ENCODE measurements at regions of chr2 and their contacts with region 1.

Region 1: DNA sequence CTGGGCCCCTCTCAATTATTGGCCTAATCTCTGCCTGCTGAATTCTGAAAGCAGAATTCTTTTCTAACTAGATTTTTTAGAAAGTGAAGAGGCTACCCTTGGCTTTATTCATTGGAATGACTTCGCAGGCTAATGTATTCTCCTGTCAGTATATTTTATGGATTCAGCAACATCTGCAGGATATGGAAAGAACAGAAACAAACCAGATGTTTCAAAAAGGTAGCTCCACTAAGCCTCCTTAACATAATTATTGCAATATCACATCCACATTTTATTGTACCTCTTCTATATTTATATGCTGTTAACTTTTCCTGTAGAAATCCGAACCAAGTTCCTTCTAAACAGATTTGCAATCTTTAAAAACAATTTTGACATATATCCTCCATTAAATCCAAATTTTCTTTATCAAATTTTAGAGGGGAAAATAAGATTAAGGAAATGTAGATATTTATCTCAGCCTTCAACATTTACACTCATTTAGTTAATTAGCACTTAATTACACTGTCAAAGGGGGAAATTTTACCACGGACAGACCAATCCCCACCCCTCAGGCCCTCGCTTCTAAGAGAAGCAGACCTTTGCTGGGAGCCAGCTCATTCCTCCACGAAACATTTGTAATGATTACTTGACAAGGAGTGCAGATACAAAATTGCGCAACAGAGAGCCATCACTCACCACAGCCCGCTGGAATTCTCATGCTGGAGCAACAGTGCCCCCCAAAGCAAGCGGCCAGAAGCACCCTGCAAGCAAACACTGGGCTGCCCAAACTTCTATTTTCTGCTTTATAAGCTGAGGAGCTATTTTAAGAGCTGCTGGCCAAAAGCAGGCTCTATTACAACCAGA is 253.4 kb downstream of the ETAA1 start:
- DNase-seq: peak; percentile 96
- H3K4me3 ChIP-seq: peak overlapping the region in 1 of 4 donors; percentile 1
- H3K27ac ChIP-seq: peak overlapping the region; percentile 72 to 91 (median 83)
- H3K4me1 ChIP-seq: peaks cover 0 to 41% (median 32%) of the 10 kb centered on the region in 4 donors
- H3K27me3 ChIP-seq: no peaks in the 10 kb centered on the region
- CTCF ChIP-seq: peak; percentile 55 to 77 (median 66)
- EP300 ChIP-seq: peak in 3 of 4 donors; percentile 11 to 72 (median 63)
- POLR2A ChIP-seq: no peak

Region 2: GRCh38 chr2:66429071-66429477 is 1221.4 kb before region 1 on chr2:
- intact Hi-C with region 1: loop called (anchors 2 kb)
- DNase-seq: no peak
- H3K4me3 ChIP-seq: no peak overlapping the region
- H3K27ac ChIP-seq: peak overlapping the region; percentile 47 to 99 (median 95)
- H3K4me1 ChIP-seq: peaks cover 0 to 51% (median 38%) of the 10 kb centered on the region in 4 donors
- H3K27me3 ChIP-seq: peaks cover 0 to 7% (median 0%) of the 10 kb centered on the region in 3 donors
- CTCF ChIP-seq: peak; percentile 85 to 95 (median 91)
- EP300 ChIP-seq: no peak
- POLR2A ChIP-seq: no peak

Region 3: GRCh38 chr2:66686755-66687154 is 963.8 kb before region 1 on chr2:
- intact Hi-C with region 1: loop called (anchors 5 kb)
- DNase-seq: no peak
- H3K4me3 ChIP-seq: no peak overlapping the region
- H3K27ac ChIP-seq: peak overlapping the region; percentile 76 to 91 (median 85)
- H3K4me1 ChIP-seq: peaks cover 0 to 55% (median 23%) of the 10 kb centered on the region in 4 donors
- H3K27me3 ChIP-seq: no peaks in the 10 kb centered on the region
- CTCF ChIP-seq: no peak
- EP300 ChIP-seq: no peak
- POLR2A ChIP-seq: no peak

Region 4: GRCh38 chr2:66897181-66897580 is 753.3 kb before region 1 on chr2:
- intact Hi-C with region 1: loop called (anchors 10 kb)
- DNase-seq: peak; percentile 74
- H3K4me3 ChIP-seq: no peak overlapping the region
- H3K27ac ChIP-seq: peak overlapping the region; percentile 7 to 91 (median 63)
- H3K4me1 ChIP-seq: peaks cover 0 to 45% (median 32%) of the 10 kb centered on the region in 4 donors
- H3K27me3 ChIP-seq: no peaks in the 10 kb centered on the region
- CTCF ChIP-seq: no peak
- EP300 ChIP-seq: peak in 2 of 4 donors; percentile 72 to 76
- POLR2A ChIP-seq: no peak

Region 5: GRCh38 chr2:67215214-67216055 is 435.1 kb before region 1 on chr2:
- intact Hi-C with region 1: loop called (anchors 10 kb)
- DNase-seq: peak; percentile 89
- H3K4me3 ChIP-seq: peak overlapping the region in 1 of 4 donors; percentile 17
- H3K27ac ChIP-seq: peak overlapping the region; percentile 65 to 83 (median 74)
- H3K4me1 ChIP-seq: peaks cover 0 to 52% (median 27%) of the 10 kb centered on the region in 4 donors
- H3K27me3 ChIP-seq: no peaks in the 10 kb centered on the region
- CTCF ChIP-seq: peak; percentile 27 to 51 (median 45)
- EP300 ChIP-seq: no peak
- POLR2A ChIP-seq: no peak

Region 6: DNA sequence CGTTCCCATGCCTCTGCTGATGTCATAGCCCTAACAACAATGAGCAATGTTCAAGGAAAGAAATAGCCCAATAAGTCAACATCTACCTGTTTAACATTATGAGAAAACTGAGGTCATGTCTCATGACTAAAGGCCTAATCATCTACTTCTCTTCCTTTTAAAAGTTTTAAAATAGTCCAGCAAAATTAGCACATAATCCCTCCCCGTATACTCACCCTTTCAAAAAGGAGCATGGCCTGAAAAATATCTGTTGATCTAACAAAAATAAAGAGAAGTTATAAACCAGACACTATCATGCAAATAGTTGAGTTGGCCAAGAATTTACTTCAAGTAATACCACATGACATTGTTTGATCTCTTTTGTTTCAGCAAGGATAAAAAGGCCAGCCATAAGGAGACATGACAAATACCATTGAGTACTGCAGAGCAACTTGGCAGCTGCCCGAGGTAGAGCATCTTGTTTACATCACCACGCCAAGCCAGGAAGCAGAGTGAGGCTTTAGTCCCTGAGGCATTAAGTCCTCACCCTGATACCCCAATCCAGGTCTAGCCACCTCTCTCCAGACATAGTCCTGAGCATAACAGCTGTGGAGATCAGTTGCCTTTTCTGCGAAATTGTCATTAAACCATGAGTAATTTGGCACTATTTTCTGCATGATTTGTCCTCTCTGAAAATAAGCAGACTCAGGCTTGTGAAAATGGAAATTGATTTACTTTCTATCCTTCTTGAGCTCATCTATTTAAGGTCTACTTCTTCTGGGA is 390.8 kb before region 1 on chr2:
- intact Hi-C with region 1: loop called (anchors 2 kb)
- DNase-seq: peak; percentile 94
- H3K4me3 ChIP-seq: no peak overlapping the region
- H3K27ac ChIP-seq: peak overlapping the region; percentile 84 to 89 (median 86)
- H3K4me1 ChIP-seq: peaks cover 0 to 28% (median 19%) of the 10 kb centered on the region in 4 donors
- H3K27me3 ChIP-seq: no peaks in the 10 kb centered on the region
- CTCF ChIP-seq: no peak
- EP300 ChIP-seq: peak; percentile 51 to 86 (median 62)
- POLR2A ChIP-seq: no peak

Region 7: GRCh38 chr2:67846370-67847070 is 196.0 kb after region 1 on chr2:
- intact Hi-C with region 1: loop called (anchors 5 kb)
- DNase-seq: peak; percentile 98
- H3K4me3 ChIP-seq: peak overlapping the region in 2 of 4 donors; percentile 4 to 21
- H3K27ac ChIP-seq: peak overlapping the region; percentile 31 to 74 (median 64)
- H3K4me1 ChIP-seq: peaks cover 0 to 21% (median 8%) of the 10 kb centered on the region in 4 donors
- H3K27me3 ChIP-seq: no peaks in the 10 kb centered on the region
- CTCF ChIP-seq: peak; percentile 57 to 83 (median 68)
- EP300 ChIP-seq: peak in 3 of 4 donors; percentile 78 to 88 (median 78)
- POLR2A ChIP-seq: no peak